T-cell (primary cell): ENCODE measurements at regions of chr13 and their contacts with region 1.

Region 1: GRCh38 chr13:40732658-40733057 is 38.3 kb downstream of the MRPS31 start:
- DNase-seq: no peak
- ATAC-seq: no peak
- H3K4me3 ChIP-seq: no peak overlapping the region
- H3K4me3 Mint-ChIP-seq: no peak overlapping the region
- H3K27ac ChIP-seq: no peak overlapping the region
- H3K27ac Mint-ChIP-seq: peak overlapping the region in 1 of 2 donors; percentile 73
- H3K4me1 ChIP-seq: peaks cover 0 to 4% of the 10 kb centered on the region in 2 experiments
- H3K4me1 Mint-ChIP-seq: peaks cover 24 to 32% (median 27%) of the 10 kb centered on the region in 3 donors
- H3K27me3 ChIP-seq: no peaks in the 10 kb centered on the region
- H3K27me3 Mint-ChIP-seq: no peaks in the 10 kb centered on the region

Region 2: GRCh38 chr13:40422588-40423235 is 309.9 kb before region 1 on chr13:
- CTCF ChIA-PET with region 1: no interaction called
- POLR2A ChIA-PET with region 1: interaction called in 1 of 2 experiments, 10 read pairs
- DNase-seq: no peak
- ATAC-seq: peak in 2 of 4 experiments; percentile 23 to 55
- H3K4me3 ChIP-seq: no peak overlapping the region
- H3K4me3 Mint-ChIP-seq: no peak overlapping the region
- H3K27ac ChIP-seq: no peak overlapping the region
- H3K27ac Mint-ChIP-seq: peak overlapping the region; percentile 12 to 30
- H3K4me1 ChIP-seq: peaks cover 3 to 5% of the 10 kb centered on the region in 2 experiments
- H3K4me1 Mint-ChIP-seq: peaks cover 11 to 25% (median 19%) of the 10 kb centered on the region in 3 donors
- H3K27me3 ChIP-seq: no peaks in the 10 kb centered on the region
- H3K27me3 Mint-ChIP-seq: no peaks in the 10 kb centered on the region

Region 3: DNA sequence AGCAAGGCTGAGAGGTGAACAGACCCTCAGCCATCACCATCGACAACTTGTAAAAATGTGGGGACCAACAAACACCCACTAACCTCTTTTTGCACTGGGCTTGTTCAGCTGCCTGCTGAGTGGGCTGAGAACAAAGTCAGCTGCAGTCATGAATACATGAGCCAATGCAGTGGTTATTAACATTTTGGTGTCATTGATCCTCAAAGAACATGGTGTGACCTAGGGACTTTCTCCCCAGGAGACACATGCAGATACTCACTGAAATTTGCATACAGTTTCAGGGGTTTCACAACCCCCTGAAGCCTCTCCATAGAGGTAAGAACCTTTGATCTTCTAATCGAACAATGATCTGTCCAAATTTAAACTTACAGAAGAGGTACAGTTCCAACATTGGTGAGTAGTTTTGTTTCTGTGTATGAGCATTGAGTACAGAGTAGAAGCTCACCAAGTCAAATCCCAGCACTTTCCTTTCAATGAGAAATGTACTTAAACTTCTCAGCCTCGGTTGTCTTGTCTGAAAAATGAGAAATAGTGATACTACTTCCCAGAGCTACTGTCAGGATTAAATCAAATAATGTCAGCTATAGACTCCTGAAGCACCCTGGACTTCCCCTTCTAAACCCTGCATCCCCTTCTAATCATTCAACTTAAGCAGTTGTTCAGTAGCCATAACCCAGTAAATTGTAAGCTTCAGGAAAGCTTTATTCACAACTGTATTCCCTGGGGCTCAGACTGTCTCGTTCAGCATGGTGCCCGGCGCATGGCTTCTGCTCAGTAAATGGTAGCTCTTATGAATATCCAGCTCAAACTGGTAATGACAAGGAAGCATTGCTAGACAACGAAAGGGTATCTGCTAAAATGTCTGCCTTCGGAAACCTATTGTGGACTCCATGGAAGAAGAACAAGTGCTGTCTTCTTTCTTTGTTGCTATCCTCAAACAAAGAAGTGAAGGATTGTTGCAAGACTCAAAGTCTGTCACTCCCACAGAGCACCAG is 214.9 kb before region 1 on chr13:
- CTCF ChIA-PET with region 1: no interaction called
- POLR2A ChIA-PET with region 1: no interaction called
- DNase-seq: no peak
- ATAC-seq: peak in 1 of 4 experiments; percentile 30
- H3K4me3 ChIP-seq: no peak overlapping the region
- H3K4me3 Mint-ChIP-seq: no peak overlapping the region
- H3K27ac ChIP-seq: no peak overlapping the region
- H3K27ac Mint-ChIP-seq: peak overlapping the region; percentile 4 to 36
- H3K4me1 ChIP-seq: peaks cover 0 to 15% of the 10 kb centered on the region in 2 experiments
- H3K4me1 Mint-ChIP-seq: peaks cover 39 to 47% (median 42%) of the 10 kb centered on the region in 3 donors
- H3K27me3 ChIP-seq: no peaks in the 10 kb centered on the region
- H3K27me3 Mint-ChIP-seq: no peaks in the 10 kb centered on the region

Region 4: DNA sequence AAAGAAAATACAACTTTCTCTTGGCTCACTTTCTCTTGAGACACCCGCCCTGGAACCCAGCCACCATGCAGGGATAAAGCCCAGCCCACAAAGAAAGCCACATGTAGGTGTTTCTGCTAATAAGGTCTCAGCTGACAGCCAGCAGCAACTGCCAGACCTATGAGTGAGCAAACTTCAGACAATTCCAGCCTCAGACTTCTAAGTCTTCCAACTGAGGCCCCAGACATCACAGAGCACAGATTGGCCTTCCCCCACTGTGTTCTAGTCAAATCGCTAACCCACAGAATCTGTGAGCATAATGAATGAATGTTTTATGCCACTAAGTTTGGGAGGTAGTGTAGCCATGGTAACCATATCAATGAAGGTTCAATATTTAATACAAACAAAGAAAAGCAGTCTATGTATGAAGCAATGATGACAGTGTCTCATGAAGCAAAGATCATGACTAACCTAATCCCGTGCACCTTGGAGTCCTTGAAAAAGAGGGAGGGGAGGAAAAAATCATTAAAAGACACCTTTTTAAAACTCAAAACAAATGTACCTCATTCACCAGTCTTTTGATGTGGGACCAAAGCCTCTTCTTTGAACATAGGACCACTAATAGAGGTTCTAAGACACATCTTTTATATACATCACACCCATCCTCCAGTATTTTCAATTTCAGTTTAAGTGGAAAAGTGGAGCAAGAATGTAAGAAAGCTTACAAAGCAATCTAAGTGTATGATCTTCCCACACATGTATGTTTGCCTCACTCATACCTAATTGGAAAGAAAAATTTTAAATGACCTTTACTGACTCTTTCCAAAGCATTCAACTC is 32.1 kb after region 1 on chr13:
- CTCF ChIA-PET with region 1: no interaction called
- POLR2A ChIA-PET with region 1: no interaction called
- DNase-seq: peak in 2 of 35 experiments; percentile 31 to 36
- ATAC-seq: peak in 2 of 4 experiments; percentile 35 to 86
- H3K4me3 ChIP-seq: no peak overlapping the region
- H3K4me3 Mint-ChIP-seq: no peak overlapping the region
- H3K27ac ChIP-seq: no peak overlapping the region
- H3K27ac Mint-ChIP-seq: peak overlapping the region; percentile 55 to 66
- H3K4me1 ChIP-seq: peaks cover 6 to 9% of the 10 kb centered on the region in 2 experiments
- H3K4me1 Mint-ChIP-seq: peaks cover 35 to 54% (median 52%) of the 10 kb centered on the region in 3 donors
- H3K27me3 ChIP-seq: no peaks in the 10 kb centered on the region
- H3K27me3 Mint-ChIP-seq: no peaks in the 10 kb centered on the region

Region 5: GRCh38 chr13:41107584-41108014 is 374.9 kb after region 1 on chr13:
- CTCF ChIA-PET with region 1: no interaction called
- POLR2A ChIA-PET with region 1: no interaction called
- DNase-seq: no peak
- ATAC-seq: no peak
- H3K4me3 ChIP-seq: no peak overlapping the region
- H3K4me3 Mint-ChIP-seq: no peak overlapping the region
- H3K27ac ChIP-seq: no peak overlapping the region
- H3K27ac Mint-ChIP-seq: no peak overlapping the region
- H3K4me1 ChIP-seq: no peaks in the 10 kb centered on the region
- H3K4me1 Mint-ChIP-seq: no peaks in the 10 kb centered on the region
- H3K27me3 ChIP-seq: no peaks in the 10 kb centered on the region
- H3K27me3 Mint-ChIP-seq: no peaks in the 10 kb centered on the region